ENCODE measurements at regions of chr18 and their contacts with region 1.

Region 1: DNA sequence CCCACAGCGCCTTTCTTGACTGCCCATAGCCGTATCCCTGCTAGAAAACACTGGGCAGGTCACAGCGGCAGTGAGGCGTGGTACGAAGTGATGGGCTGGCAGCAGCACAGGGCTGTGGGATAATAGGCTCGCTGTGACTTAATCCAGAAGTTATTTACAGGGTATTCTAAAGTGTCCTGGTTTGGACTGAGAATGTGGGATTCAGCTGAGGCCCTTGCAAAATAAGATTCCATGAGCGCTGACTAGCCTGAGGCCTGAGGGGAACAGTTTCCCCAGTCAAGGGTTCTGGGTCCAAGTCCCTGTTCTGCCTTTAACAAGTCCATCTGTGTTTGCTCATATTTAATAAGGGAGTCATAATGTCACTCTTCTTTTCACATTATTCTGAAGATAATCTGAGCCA is 34.6 kb downstream of the SETBP1 start:
- DNase-seq: peak; percentile 68
- H3K4me3 ChIP-seq: no peak overlapping the region
- H3K27ac ChIP-seq: peak overlapping the region; percentile 60 to 76
- H3K4me1 ChIP-seq: peaks cover 11% of the 10 kb centered on the region
- H3K27me3 ChIP-seq: no peaks in the 10 kb centered on the region
- CTCF ChIP-seq: no peak
- POLR2A ChIP-seq: no peak

Region 2: GRCh38 chr18:44526705-44527415 is 188.4 kb before region 1 on chr18:
- intact Hi-C with region 1: no loop called
- DNase-seq: no peak
- H3K4me3 ChIP-seq: no peak overlapping the region
- H3K27ac ChIP-seq: no peak overlapping the region
- H3K4me1 ChIP-seq: no peaks in the 10 kb centered on the region
- H3K27me3 ChIP-seq: no peaks in the 10 kb centered on the region
- CTCF ChIP-seq: no peak
- POLR2A ChIP-seq: no peak

Region 3: DNA sequence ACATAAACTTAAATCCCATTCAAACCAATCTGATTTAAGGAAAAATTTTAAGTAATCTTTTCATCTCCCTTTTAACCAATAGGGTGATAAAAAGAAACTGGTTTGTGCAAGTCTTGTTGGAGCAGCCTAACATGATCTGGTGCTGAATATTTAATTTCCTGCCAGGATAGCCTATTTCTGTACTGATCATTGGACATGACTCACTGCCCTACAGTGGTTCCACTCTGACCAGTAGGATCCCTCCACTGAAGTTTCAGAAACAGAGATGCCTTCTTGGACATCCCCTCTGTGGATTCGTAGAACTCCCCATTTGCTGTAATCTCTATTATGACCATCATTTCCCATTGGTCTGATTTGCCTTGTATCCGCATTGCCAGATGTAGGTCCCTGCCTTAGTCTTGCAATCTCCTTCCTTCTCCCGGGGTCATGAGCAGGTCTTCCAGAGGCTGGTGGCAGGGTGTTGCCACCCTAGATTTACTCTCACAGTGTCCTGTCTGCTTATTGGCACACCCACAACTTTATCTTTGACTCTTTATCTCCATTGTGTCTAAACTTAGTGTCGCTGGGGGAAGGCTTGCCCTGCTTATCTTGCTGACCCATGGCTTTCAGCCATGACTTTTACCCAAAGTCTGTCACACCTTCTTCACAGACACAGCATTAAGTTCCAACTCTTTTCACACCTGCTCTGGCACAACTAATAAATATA is 46.8 kb before region 1 on chr18:
- intact Hi-C with region 1: no loop called
- DNase-seq: no peak
- H3K4me3 ChIP-seq: no peak overlapping the region
- H3K27ac ChIP-seq: no peak overlapping the region
- H3K4me1 ChIP-seq: no peaks in the 10 kb centered on the region
- H3K27me3 ChIP-seq: no peaks in the 10 kb centered on the region
- CTCF ChIP-seq: no peak
- POLR2A ChIP-seq: no peak

Region 4: DNA sequence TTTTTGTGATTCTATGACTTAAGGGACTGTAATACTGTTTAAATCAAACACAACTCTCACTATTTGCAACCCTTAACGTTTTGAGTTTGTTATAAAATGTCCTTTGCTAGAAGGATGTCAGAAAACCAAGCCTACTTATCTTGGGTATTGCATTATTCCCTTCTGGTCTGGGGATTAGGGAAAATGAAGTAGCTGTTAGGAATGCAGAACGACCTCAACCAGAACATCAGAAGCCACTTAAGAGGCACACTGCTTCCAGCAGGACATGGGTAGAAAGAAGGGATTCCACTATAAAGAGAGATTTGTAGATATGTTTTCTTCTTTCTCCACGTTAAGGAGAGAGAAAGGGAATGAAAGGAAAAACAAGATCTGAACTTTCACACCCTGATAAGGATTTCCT is 66.6 kb after region 1 on chr18:
- intact Hi-C with region 1: loop called (anchors 5 kb)
- DNase-seq: no peak
- H3K4me3 ChIP-seq: no peak overlapping the region
- H3K27ac ChIP-seq: no peak overlapping the region
- H3K4me1 ChIP-seq: no peaks in the 10 kb centered on the region
- H3K27me3 ChIP-seq: no peaks in the 10 kb centered on the region
- CTCF ChIP-seq: no peak
- POLR2A ChIP-seq: no peak

Region 5: DNA sequence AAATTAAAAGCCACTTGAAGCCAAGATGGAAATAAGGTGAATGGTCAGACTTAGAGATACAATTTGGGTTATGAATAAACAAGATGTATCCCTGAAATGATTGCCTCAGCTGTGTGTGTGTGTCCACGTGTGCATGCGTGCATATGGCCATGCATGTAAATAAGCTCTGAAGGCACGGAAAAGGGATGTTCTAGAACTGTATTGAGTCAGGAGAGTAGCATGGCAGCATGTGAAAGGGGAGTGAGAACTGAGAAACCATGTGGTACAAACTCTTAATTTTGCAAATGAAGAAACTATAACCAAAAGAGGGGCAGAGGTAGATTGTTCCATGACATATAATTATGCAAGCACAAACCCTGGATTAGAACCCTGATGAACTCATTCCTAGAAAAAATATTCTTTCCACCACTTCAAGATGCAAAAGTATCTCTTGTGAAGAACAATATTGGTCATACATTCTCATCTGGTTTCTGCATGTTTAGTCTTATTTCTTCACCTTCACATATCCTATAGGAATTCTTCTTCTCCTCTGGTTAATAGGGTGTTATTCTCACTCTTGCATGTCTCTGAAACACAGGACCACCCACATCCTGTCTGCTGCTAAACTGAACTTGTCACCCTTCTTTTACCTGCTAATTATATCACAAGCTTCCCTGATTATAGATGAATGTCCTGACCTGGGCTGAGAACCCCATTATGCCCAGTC is 421.3 kb after region 1 on chr18:
- intact Hi-C with region 1: no loop called
- DNase-seq: no peak
- H3K4me3 ChIP-seq: no peak overlapping the region
- H3K27ac ChIP-seq: no peak overlapping the region
- H3K4me1 ChIP-seq: no peaks in the 10 kb centered on the region
- H3K27me3 ChIP-seq: no peaks in the 10 kb centered on the region
- CTCF ChIP-seq: no peak
- POLR2A ChIP-seq: no peak

Region 6: GRCh38 chr18:45171679-45172191 is 456.5 kb after region 1 on chr18:
- intact Hi-C with region 1: no loop called
- DNase-seq: no peak
- H3K4me3 ChIP-seq: no peak overlapping the region
- H3K27ac ChIP-seq: no peak overlapping the region
- H3K4me1 ChIP-seq: peaks cover 8% of the 10 kb centered on the region
- H3K27me3 ChIP-seq: no peaks in the 10 kb centered on the region
- CTCF ChIP-seq: no peak
- POLR2A ChIP-seq: no peak

Measured in prostate gland (tissue), 2 donors.